ENCODE measurements at regions of chr16 and their contacts with region 1.

Region 1: DNA sequence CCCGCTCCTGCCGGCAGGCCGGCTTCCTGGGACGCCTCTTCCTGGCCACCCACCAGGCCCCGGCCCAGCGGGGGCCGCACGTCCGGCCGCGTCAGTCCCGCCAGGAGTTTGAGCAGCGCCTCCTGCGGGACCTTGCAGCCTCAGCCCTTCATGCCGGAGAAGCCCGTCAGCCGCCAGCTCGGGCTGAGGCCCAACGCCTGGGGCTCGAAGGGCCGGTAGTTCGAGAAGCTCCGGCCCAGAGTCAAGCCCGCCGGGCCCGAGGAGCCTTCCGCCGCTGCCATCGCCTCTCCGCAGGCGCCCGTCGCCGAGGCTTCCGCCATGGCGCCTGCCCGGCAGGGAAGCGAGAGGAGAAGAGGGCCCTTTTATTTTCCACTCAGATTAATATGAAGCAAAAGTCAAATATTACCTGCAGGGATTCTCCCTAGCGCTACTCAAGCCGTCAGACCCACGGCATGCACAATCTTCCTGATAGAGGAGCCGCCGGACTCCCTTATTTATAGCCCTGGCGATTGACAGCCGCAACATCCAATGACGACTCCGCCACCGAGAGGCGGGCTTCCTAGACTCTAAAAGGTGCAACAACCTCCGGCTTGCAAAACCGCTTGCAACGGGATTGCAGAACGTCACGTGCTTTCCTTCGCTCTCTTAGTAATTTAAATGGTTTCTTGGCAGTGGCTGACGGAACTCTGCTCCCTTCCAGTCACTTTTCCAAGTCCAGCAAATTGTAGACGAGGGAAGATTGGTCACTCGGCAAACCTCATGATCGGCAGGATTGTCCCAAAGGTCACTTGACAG is at the start of gene SEPHS2:
- DNase-seq: peak; percentile 99
- ATAC-seq: peak; percentile 97
- H3K4me3 Mint-ChIP-seq: peak within 1 kb of the TSS; percentile 86
- H3K27ac Mint-ChIP-seq: peak within 1 kb of the TSS; percentile 90
- H3K4me1 Mint-ChIP-seq: peaks cover 51% of the 10 kb centered on the region
- H3K27me3 Mint-ChIP-seq: no peaks in the 10 kb centered on the region
- total RNA-seq, gene SEPHS2: 63.3 to 92.9 TPM

Region 2: GRCh38 chr16:30401768-30402425 is 43.7 kb before region 1 on chr16:
- CTCF ChIA-PET with region 1: no interaction called
- DNase-seq: no peak
- ATAC-seq: no peak
- H3K4me3 Mint-ChIP-seq: peak overlapping the region; percentile 0
- H3K27ac Mint-ChIP-seq: no peak overlapping the region
- H3K4me1 Mint-ChIP-seq: peaks cover 45% of the 10 kb centered on the region
- H3K27me3 Mint-ChIP-seq: peaks cover 20% of the 10 kb centered on the region

Region 3: GRCh38 chr16:30458561-30459394 is 13.2 kb after region 1 on chr16:
- CTCF ChIA-PET with region 1: interaction called, 31 read pairs
- DNase-seq: peak; percentile 97
- ATAC-seq: peak; percentile 96
- H3K4me3 Mint-ChIP-seq: peak overlapping the region; percentile 53
- H3K27ac Mint-ChIP-seq: peak overlapping the region; percentile 96
- H3K4me1 Mint-ChIP-seq: peaks cover 64% of the 10 kb centered on the region
- H3K27me3 Mint-ChIP-seq: peaks cover 2% of the 10 kb centered on the region

Region 4: DNA sequence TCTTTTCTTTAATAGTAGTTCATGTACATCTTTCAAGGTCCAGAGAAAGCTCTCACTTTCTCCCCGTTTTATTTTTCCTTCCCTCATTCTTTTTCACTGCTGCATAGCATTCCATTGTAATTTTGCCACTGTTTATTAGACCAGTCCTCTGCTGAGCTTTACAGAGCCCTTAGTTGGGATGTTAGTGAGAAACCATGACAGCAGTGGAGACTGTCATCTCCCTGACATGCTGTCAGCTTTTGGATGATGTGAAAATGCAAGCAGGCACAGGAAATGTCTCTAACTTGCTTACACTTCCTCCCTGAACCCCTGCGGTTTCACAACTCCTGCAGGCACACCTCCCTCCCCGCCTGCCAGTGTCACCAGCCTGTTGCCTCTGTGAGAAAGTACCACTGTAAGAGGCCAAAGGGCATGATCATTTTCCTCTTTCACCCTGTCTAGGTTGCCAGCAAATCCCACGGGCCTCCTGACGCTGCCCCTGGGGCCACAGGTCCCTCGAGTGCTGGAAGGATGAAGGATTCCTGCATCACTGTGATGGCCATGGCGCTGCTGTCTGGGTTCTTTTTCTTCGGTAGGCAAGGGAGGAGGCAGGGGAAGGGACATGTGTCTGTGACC is 26.8 kb after region 1 on chr16 and contains the start of gene ITGAL:
- CTCF ChIA-PET with region 1: interaction called, 122 read pairs
- DNase-seq: peak; percentile 95
- ATAC-seq: peak; percentile 77
- H3K4me3 Mint-ChIP-seq: peak within 1 kb of the TSS; percentile 100
- H3K27ac Mint-ChIP-seq: peak within 1 kb of the TSS; percentile 96
- H3K4me1 Mint-ChIP-seq: peaks cover 64% of the 10 kb centered on the region
- H3K27me3 Mint-ChIP-seq: no peaks in the 10 kb centered on the region
- total RNA-seq, gene ITGAL: 566 to 685 TPM

Region 5: GRCh38 chr16:30478766-30479478 is 33.3 kb after region 1 on chr16:
- CTCF ChIA-PET with region 1: interaction called, 122 read pairs
- DNase-seq: no peak
- ATAC-seq: no peak
- H3K4me3 Mint-ChIP-seq: no peak overlapping the region
- H3K27ac Mint-ChIP-seq: peak overlapping the region; percentile 68
- H3K4me1 Mint-ChIP-seq: peaks cover 81% of the 10 kb centered on the region
- H3K27me3 Mint-ChIP-seq: no peaks in the 10 kb centered on the region

Region 6: DNA sequence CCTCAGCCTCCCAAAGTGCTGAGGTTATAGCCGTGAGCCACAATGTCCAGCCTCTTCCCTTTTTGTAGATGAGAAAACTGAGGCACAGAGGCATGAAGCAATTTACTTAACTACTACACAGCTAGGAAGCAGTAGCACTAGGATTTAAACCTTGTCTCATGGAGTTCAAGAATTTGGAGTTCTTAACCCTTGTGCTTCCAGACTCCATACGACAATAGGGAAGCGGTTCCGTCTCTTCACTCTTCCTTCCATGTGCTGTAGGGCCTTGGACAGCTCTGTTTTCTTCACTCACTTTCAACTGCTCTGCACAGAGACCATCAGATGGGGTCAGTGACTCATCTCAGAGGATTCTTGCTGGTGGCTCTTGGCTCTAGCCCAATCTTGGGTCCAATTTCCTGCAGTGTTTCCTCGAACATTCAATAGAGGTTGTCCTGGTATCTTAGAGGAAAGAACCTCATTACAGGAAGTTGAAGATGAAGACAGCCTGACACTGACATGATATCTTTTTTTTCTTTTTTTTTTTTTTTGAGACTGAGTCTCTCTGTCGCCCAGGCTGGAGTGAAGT is 46.2 kb after region 1 on chr16:
- CTCF ChIA-PET with region 1: interaction called, 26 read pairs
- DNase-seq: peak; percentile 59
- ATAC-seq: peak; percentile 83
- H3K4me3 Mint-ChIP-seq: no peak overlapping the region
- H3K27ac Mint-ChIP-seq: peak overlapping the region; percentile 65
- H3K4me1 Mint-ChIP-seq: peaks cover 53% of the 10 kb centered on the region
- H3K27me3 Mint-ChIP-seq: no peaks in the 10 kb centered on the region

Region 7: DNA sequence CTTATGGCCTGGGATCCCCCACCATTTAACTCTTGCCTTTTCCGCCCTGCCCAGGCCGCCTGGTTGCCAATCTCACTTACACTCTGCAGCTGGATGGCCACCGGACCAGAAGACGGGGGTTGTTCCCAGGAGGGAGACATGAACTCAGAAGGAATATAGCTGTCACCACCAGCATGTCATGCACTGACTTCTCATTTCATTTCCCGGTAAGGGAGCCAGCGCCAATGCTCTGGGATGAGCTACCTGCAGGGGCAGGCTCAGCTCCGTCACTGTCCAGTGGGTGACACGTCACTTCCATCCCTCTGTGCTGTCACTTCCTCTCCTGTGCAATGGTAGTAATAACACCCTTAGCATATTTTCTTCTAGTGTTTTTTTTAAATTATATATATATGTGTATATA is 53.7 kb after region 1 on chr16:
- CTCF ChIA-PET with region 1: interaction called, 13 read pairs
- DNase-seq: no peak
- ATAC-seq: no peak
- H3K4me3 Mint-ChIP-seq: no peak overlapping the region
- H3K27ac Mint-ChIP-seq: no peak overlapping the region
- H3K4me1 Mint-ChIP-seq: peaks cover 16% of the 10 kb centered on the region
- H3K27me3 Mint-ChIP-seq: no peaks in the 10 kb centered on the region

Measured in activated CD8-positive, alpha-beta memory T cell treated with anti-CD3 and anti-CD28 coated beads, Interleukin-2, amount 10 ng/mL, durations not matched to agents 7 days and 5 days (primary cell).